WTC11 (cell line): ENCODE measurements at regions of chr2 and their contacts with region 1.

Region 1: GRCh38 chr2:170235860-170236679 is 58.1 kb downstream of the MYO3B start:
- DNase-seq: peak; percentile 36
- ATAC-seq: peak; percentile 85
- H3K4me3 Mint-ChIP-seq: no peak overlapping the region
- H3K27ac Mint-ChIP-seq: no peak overlapping the region
- H3K4me1 Mint-ChIP-seq: peaks cover 27% of the 10 kb centered on the region
- H3K27me3 Mint-ChIP-seq: peaks cover 7% of the 10 kb centered on the region
- CTCF ChIP-seq: peak; percentile 43

Region 2: DNA sequence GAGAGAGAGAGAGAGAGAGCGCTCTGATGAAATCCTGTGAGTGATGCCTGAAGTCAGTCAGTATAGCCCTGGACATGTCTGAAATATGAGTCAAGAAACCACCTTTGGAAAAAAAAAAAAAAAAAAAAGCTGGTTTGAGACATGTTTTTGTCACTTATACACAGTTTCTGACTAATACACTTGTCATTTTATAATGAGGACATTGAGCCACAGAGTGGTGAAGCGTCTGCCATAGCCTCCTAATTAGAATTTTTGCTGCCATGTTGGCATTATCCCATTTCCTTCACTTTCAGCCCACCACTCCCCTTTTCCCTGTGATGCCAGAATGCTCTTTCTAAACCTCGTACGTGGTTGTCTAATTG is 73.8 kb before region 1 on chr2:
- CTCF ChIA-PET with region 1: no interaction called
- POLR2A ChIA-PET with region 1: no interaction called
- DNase-seq: no peak
- ATAC-seq: no peak
- H3K4me3 Mint-ChIP-seq: no peak overlapping the region
- H3K27ac Mint-ChIP-seq: no peak overlapping the region
- H3K4me1 Mint-ChIP-seq: peaks cover 26% of the 10 kb centered on the region
- H3K27me3 Mint-ChIP-seq: no peaks in the 10 kb centered on the region
- CTCF ChIP-seq: no peak

Region 3: GRCh38 chr2:170221317-170222288 is 14.5 kb before region 1 on chr2:
- CTCF ChIA-PET with region 1: interaction called, 14 read pairs
- POLR2A ChIA-PET with region 1: no interaction called
- DNase-seq: no peak
- ATAC-seq: peak; percentile 35
- H3K4me3 Mint-ChIP-seq: no peak overlapping the region
- H3K27ac Mint-ChIP-seq: peak overlapping the region; percentile 98
- H3K4me1 Mint-ChIP-seq: peaks cover 56% of the 10 kb centered on the region
- H3K27me3 Mint-ChIP-seq: peaks cover 7% of the 10 kb centered on the region
- CTCF ChIP-seq: no peak

Region 4: DNA sequence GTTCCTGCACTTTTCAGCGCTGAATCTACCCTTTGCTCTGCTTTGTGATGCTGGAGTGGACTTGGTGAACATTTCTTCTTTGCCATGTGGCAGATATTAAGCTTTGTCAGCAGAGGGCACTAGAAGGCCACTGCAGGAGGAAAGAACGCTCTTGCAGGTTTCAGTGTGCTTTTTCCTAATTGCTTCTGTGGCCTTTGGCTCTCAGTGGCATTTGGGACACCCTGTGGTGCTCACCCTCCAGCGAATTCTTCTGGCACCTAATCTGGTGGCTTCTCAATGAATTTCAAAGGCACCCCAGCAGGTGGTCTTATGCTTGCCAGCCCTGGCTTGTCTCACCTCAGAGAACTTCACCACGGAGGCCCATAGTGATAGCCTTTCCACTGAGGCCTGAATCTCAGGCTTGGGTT is 88.6 kb after region 1 on chr2:
- CTCF ChIA-PET with region 1: interaction called, 13 read pairs
- POLR2A ChIA-PET with region 1: no interaction called
- DNase-seq: peak; percentile 74
- ATAC-seq: peak; percentile 89
- H3K4me3 Mint-ChIP-seq: no peak overlapping the region
- H3K27ac Mint-ChIP-seq: no peak overlapping the region
- H3K4me1 Mint-ChIP-seq: peaks cover 15% of the 10 kb centered on the region
- H3K27me3 Mint-ChIP-seq: no peaks in the 10 kb centered on the region; the same call in 1 of the 2 replicates
- CTCF ChIP-seq: peak; percentile 61

Region 5: DNA sequence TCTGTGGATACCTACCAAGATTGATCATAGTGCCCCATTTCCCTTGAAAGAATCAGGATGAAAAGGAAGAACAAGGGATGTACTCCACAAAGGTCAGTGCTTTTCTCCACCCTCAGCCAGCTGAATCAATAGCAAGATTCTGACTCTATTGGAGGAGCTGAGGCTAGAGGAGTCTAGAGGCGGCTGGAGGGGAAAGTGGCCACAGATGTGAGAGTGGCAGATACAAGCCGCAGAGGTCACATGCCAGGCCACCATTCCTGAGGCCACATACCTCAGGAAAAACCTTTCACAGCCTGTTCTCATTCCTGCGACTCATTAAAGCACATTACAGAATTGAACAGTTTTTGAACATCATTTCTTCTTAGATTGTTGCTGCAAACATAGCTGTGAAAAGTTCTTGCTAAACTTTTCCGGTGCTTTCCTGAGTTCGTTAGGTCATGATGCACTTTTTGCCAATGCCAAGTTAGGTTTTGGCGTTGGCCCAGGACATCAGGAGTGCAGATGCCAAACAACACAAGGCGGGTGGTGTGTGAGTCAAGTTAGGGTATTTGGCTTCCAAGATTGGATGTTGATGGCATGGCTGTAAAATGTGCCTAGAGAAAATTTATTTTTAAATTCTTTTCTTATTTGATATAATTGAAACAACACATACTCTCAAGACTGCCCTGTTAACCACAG is 318.3 kb after region 1 on chr2:
- CTCF ChIA-PET with region 1: no interaction called
- POLR2A ChIA-PET with region 1: no interaction called
- DNase-seq: no peak
- ATAC-seq: no peak
- H3K4me3 Mint-ChIP-seq: no peak overlapping the region
- H3K27ac Mint-ChIP-seq: no peak overlapping the region
- H3K4me1 Mint-ChIP-seq: no peaks in the 10 kb centered on the region
- H3K27me3 Mint-ChIP-seq: no peaks in the 10 kb centered on the region
- CTCF ChIP-seq: no peak